Endothelial cell of umbilical vein (primary cell): ENCODE measurements at regions of chr20 and their contacts with region 1.

Region 1: GRCh38 chr20:1118336-1119127 is at the start of gene PSMF1:
- DNase-seq: peak; percentile 90
- H3K4me3 ChIP-seq: peak within 1 kb of the TSS; percentile 27 to 88 (median 78)
- H3K27ac ChIP-seq: peak within 1 kb of the TSS; percentile 25
- H3K4me1 ChIP-seq: peaks cover 32% of the 10 kb centered on the region
- H3K27me3 ChIP-seq: no peaks in the 10 kb centered on the region
- CTCF ChIP-seq: no peak
- POLR2A ChIP-seq: peak; percentile 90
- total RNA-seq, gene PSMF1: 140 and 142 TPM in 2 replicates

Region 2: GRCh38 chr20:1185790-1186334 is 67.3 kb after region 1 on chr20:
- CTCF ChIA-PET with region 1: no interaction called
- POLR2A ChIA-PET with region 1: no interaction called
- dilution Hi-C with region 1: no loop called
- intact Hi-C with region 1: loop called (anchors 1 kb)
- DNase-seq: peak; percentile 48
- H3K4me3 ChIP-seq: peak overlapping the region in 1 of 3 experiments; percentile 45
- H3K27ac ChIP-seq: no peak overlapping the region
- H3K4me1 ChIP-seq: no peaks in the 10 kb centered on the region
- H3K27me3 ChIP-seq: peaks cover 14 to 31% of the 10 kb centered on the region in 2 experiments
- CTCF ChIP-seq: peak; percentile 50 to 78
- POLR2A ChIP-seq: no peak

Region 3: GRCh38 chr20:1225783-1226654 is 107.5 kb after region 1 on chr20 and contains the start of gene RAD21L1:
- CTCF ChIA-PET with region 1: interaction called, 4 read pairs
- POLR2A ChIA-PET with region 1: no interaction called
- dilution Hi-C with region 1: no loop called
- intact Hi-C with region 1: loop called (anchors 5 kb)
- DNase-seq: peak; percentile 50
- H3K4me3 ChIP-seq: peak within 1 kb of the TSS; percentile 70 to 90 (median 71)
- H3K27ac ChIP-seq: peak within 1 kb of the TSS; percentile 70
- H3K4me1 ChIP-seq: peaks cover 6% of the 10 kb centered on the region
- H3K27me3 ChIP-seq: peaks cover 0 to 23% of the 10 kb centered on the region in 2 experiments
- CTCF ChIP-seq: no peak
- POLR2A ChIP-seq: no peak
- total RNA-seq, gene RAD21L1: not detected in 2 replicates

Region 4: GRCh38 chr20:1301031-1301529 is 182.5 kb after region 1 on chr20:
- CTCF ChIA-PET with region 1: no interaction called
- POLR2A ChIA-PET with region 1: no interaction called
- dilution Hi-C with region 1: no loop called
- intact Hi-C with region 1: loop called (anchors 10 kb)
- DNase-seq: peak; percentile 64
- H3K4me3 ChIP-seq: no peak overlapping the region
- H3K27ac ChIP-seq: no peak overlapping the region
- H3K4me1 ChIP-seq: peaks cover 12% of the 10 kb centered on the region
- H3K27me3 ChIP-seq: no peaks in the 10 kb centered on the region
- CTCF ChIP-seq: no peak
- POLR2A ChIP-seq: no peak